Panc1 (cell line): ENCODE measurements at regions of chr11 and their contacts with region 1.

Region 1: DNA sequence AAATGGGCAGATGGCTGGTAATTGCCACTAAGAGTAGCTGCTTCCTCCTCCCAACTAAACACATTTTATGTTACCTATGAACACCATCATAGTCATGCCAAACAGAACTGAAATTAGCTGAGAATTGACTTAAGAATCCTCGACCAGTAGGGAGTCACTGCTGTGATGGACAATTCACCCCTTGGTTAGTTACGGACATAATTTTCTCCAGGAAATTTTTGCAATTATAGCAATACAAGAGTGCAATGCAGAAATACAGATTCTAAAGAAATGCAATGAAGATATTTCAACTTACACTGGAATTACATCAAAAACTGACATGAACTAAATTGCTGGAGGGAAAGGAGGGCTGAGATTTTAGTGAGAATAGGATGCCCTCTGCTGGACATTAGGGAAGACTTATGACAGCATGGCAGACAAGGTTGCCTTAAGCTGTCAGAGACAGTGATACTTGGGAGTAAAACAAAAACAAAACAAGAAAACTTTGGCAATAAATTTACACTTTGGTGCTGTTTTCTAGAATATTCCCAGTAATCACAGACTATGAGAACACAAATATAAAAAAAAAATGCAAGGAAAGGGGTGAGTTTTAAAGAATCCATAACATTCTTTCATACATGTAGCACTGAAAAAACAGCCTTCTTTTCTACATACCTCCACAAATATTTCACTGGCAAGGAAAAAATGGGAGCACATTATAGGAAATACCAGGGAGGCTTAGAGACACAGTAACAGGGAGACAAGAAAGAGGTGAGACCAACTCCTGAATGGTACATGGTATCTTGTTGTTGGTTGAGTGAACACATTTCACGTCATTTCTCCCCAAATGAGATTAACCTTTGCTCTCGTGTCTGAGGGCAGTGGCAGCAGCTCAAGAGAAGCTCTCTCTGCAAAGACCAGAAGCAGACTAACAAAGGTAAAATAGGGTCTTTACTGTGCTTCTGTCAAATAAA is 11.2 kb upstream of the PPP2R1B start:
- DNase-seq: peak; percentile 45
- ATAC-seq: peak; percentile 95
- H3K4me3 ChIP-seq: no peak overlapping the region
- H3K27ac ChIP-seq: no peak overlapping the region
- H3K4me1 ChIP-seq: no peaks in the 10 kb centered on the region
- H3K27me3 ChIP-seq: no peaks in the 10 kb centered on the region
- CTCF ChIP-seq: peak; percentile 77

Region 2: GRCh38 chr11:111565114-111565720 is 212.2 kb before region 1 on chr11:
- CTCF ChIA-PET with region 1: no interaction called
- POLR2A ChIA-PET with region 1: no interaction called
- in situ Hi-C with region 1: no loop called
- intact Hi-C with region 1: loop called (anchors 1 kb)
- DNase-seq: peak; percentile 80
- ATAC-seq: peak; percentile 46
- H3K4me3 ChIP-seq: no peak overlapping the region
- H3K27ac ChIP-seq: peak overlapping the region; percentile 57; the same call in 1 of the 2 replicates
- H3K4me1 ChIP-seq: peaks cover 3% of the 10 kb centered on the region; the same call in 1 of the 2 replicates
- H3K27me3 ChIP-seq: no peaks in the 10 kb centered on the region
- CTCF ChIP-seq: peak; percentile 92

Region 3: GRCh38 chr11:111586388-111586831 is 191.0 kb before region 1 on chr11:
- CTCF ChIA-PET with region 1: interaction called, 3 read pairs
- POLR2A ChIA-PET with region 1: no interaction called
- in situ Hi-C with region 1: no loop called
- intact Hi-C with region 1: loop called (anchors 5 kb)
- DNase-seq: peak; percentile 42
- ATAC-seq: peak; percentile 87
- H3K4me3 ChIP-seq: no peak overlapping the region
- H3K27ac ChIP-seq: no peak overlapping the region
- H3K4me1 ChIP-seq: no peaks in the 10 kb centered on the region
- H3K27me3 ChIP-seq: no peaks in the 10 kb centered on the region
- CTCF ChIP-seq: peak; percentile 77; the same call in 1 of the 2 replicates

Region 4: DNA sequence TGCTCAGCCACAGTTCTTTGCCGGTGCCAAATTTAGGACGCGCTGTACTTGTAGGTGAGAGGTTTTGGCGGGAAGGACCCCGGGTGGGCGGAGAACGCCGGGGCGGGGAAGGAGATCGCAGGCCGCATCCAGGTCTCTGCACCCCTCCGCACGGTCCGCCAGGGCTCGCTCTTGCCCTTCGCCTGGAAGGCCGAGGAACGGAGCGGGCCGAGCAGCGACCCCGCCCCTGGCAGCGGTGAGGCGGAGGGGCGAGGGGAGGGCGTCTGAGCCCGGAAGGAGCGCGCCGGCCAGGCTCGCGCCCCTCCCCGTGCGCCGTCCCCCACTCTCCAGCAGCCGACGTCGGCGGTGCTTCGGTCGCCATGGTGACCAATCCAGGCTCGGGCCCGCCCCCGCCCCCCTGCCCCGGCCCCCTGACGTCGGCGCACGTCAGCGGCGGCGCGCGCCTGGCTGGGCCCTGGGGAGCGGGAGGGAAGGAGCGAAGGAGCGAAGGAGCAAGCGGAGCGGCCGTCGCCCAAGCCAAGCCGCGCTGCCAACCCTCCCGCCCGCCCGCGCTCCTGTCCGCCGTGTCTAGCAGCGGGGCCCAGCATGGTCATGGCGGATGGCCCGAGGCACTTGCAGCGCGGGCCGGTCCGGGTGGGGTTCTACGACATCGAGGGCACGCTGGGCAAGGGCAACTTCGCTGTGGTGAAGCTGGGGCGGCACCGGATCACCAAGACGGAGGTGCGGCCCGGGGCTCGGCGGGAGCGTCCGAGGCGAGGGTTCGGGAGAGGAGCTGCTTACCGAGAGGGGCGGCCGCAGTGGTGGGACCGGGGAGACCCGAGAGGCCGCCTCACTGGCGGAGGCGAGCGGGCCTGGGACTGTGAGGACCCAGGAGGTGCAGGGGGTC is 175.1 kb before region 1 on chr11 and contains the start of gene SIK2:
- CTCF ChIA-PET with region 1: interaction called, 4 read pairs
- POLR2A ChIA-PET with region 1: interaction called, 8 read pairs
- in situ Hi-C with region 1: no loop called
- intact Hi-C with region 1: loop called (anchors 2 kb)
- DNase-seq: peak; percentile 64
- ATAC-seq: peak; percentile 93
- H3K4me3 ChIP-seq: peak within 1 kb of the TSS; percentile 71 to 78
- H3K27ac ChIP-seq: peak within 1 kb of the TSS; percentile 67
- H3K4me1 ChIP-seq: peaks cover 25% of the 10 kb centered on the region
- H3K27me3 ChIP-seq: no peaks in the 10 kb centered on the region
- CTCF ChIP-seq: peak; percentile 98
- total RNA-seq, gene SIK2: 17.0 TPM

Region 5: GRCh38 chr11:111694851-111695250 is 82.5 kb before region 1 on chr11:
- CTCF ChIA-PET with region 1: no interaction called
- POLR2A ChIA-PET with region 1: no interaction called
- in situ Hi-C with region 1: no loop called
- intact Hi-C with region 1: no loop called
- DNase-seq: no peak
- ATAC-seq: no peak
- H3K4me3 ChIP-seq: no peak overlapping the region
- H3K27ac ChIP-seq: no peak overlapping the region
- H3K4me1 ChIP-seq: no peaks in the 10 kb centered on the region
- H3K27me3 ChIP-seq: no peaks in the 10 kb centered on the region
- CTCF ChIP-seq: no peak

Region 6: GRCh38 chr11:111756097-111756496 is 21.3 kb before region 1 on chr11:
- CTCF ChIA-PET with region 1: interaction called, 4 read pairs
- POLR2A ChIA-PET with region 1: interaction called, 11 read pairs
- in situ Hi-C with region 1: no loop called
- intact Hi-C with region 1: no loop called
- DNase-seq: no peak
- ATAC-seq: no peak
- H3K4me3 ChIP-seq: no peak overlapping the region
- H3K27ac ChIP-seq: no peak overlapping the region
- H3K4me1 ChIP-seq: no peaks in the 10 kb centered on the region
- H3K27me3 ChIP-seq: no peaks in the 10 kb centered on the region
- CTCF ChIP-seq: no peak

Region 7: GRCh38 chr11:111841370-111842053 is 64.1 kb after region 1 on chr11:
- CTCF ChIA-PET with region 1: interaction called, 6 read pairs
- POLR2A ChIA-PET with region 1: no interaction called
- in situ Hi-C with region 1: no loop called
- intact Hi-C with region 1: loop called (anchors 5 kb)
- DNase-seq: peak; percentile 67
- ATAC-seq: peak; percentile 99
- H3K4me3 ChIP-seq: no peak overlapping the region
- H3K27ac ChIP-seq: no peak overlapping the region
- H3K4me1 ChIP-seq: peaks cover 3% of the 10 kb centered on the region; the same call in 1 of the 2 replicates
- H3K27me3 ChIP-seq: no peaks in the 10 kb centered on the region
- CTCF ChIP-seq: peak; percentile 95